ENCODE measurements at regions of chr3 and their contacts with region 1.

Region 1: GRCh38 chr3:194395778-194396547 is 3.1 kb downstream of the GP5 start:
- DNase-seq: peak; percentile 29 to 86 (median 74)
- ATAC-seq: peak; percentile 85
- H3K4me3 ChIP-seq: peak overlapping the region; percentile 73
- H3K4me3 Mint-ChIP-seq: peak overlapping the region; percentile 82 to 98 (median 90)
- H3K27ac ChIP-seq: peak overlapping the region; percentile 81
- H3K27ac Mint-ChIP-seq: peak overlapping the region; percentile 73 to 98 (median 93)
- H3K4me1 ChIP-seq: peaks cover 4 to 26% of the 10 kb centered on the region in 2 donors
- H3K4me1 Mint-ChIP-seq: peaks cover 34 to 64% (median 47%) of the 10 kb centered on the region in 7 donors
- H3K27me3 ChIP-seq: no peaks in the 10 kb centered on the region
- H3K27me3 Mint-ChIP-seq: peaks cover 0 to 26% (median 0%) of the 10 kb centered on the region in 5 donors

Region 2: GRCh38 chr3:194141415-194142155 is 254.4 kb before region 1 on chr3:
- CTCF ChIA-PET with region 1: no interaction called
- POLR2A ChIA-PET with region 1: interaction called, 3 read pairs
- intact Hi-C with region 1: loop called (anchors 1 to 2 kb)
- DNase-seq: peak in 7 of 9 donors; percentile 36 to 74 (median 46)
- ATAC-seq: peak; percentile 55
- H3K4me3 ChIP-seq: peak overlapping the region; percentile 40
- H3K4me3 Mint-ChIP-seq: peak overlapping the region; percentile 69 to 91 (median 80)
- H3K27ac ChIP-seq: peak overlapping the region; percentile 42
- H3K27ac Mint-ChIP-seq: peak overlapping the region; percentile 14 to 82 (median 60)
- H3K4me1 ChIP-seq: peaks cover 8 to 21% of the 10 kb centered on the region in 2 donors
- H3K4me1 Mint-ChIP-seq: peaks cover 18 to 41% (median 31%) of the 10 kb centered on the region in 7 donors
- H3K27me3 ChIP-seq: peaks cover 0 to 7% of the 10 kb centered on the region in 2 donors
- H3K27me3 Mint-ChIP-seq: peaks cover 0 to 60% (median 20%) of the 10 kb centered on the region in 5 donors

Region 3: DNA sequence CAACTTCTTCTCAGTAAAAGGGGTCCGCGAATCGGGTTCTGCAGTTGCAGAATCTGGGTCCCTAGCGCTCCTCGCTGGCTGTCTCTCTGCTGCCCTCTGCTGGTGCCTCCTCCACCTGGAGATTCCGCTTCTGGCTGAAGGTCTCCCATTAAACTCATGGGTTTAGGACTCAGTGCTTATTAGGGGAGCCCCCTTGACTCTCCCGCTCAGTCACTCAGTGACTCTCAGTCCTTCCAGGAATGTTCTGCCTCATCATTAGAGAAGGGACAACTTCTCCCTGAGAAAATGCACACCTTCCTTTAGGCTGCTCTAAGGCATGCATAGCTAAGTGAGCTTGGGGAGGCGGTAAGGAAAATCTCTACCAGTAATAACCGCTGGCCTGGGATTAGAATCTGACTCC is 52.0 kb before region 1 on chr3:
- CTCF ChIA-PET with region 1: interaction called, 256 read pairs
- POLR2A ChIA-PET with region 1: interaction called, 5 read pairs
- intact Hi-C with region 1: loop called in 1 of 2 experiments (anchors 1 kb)
- DNase-seq: peak; percentile 36 to 74 (median 59)
- ATAC-seq: peak; percentile 82
- H3K4me3 ChIP-seq: no peak overlapping the region
- H3K4me3 Mint-ChIP-seq: no peak overlapping the region
- H3K27ac ChIP-seq: no peak overlapping the region
- H3K27ac Mint-ChIP-seq: no peak overlapping the region
- H3K4me1 ChIP-seq: no peaks in the 10 kb centered on the region
- H3K4me1 Mint-ChIP-seq: peaks cover 0 to 5% (median 0%) of the 10 kb centered on the region in 7 donors
- H3K27me3 ChIP-seq: no peaks in the 10 kb centered on the region
- H3K27me3 Mint-ChIP-seq: peaks cover 0 to 7% (median 7%) of the 10 kb centered on the region in 5 donors

Region 4: DNA sequence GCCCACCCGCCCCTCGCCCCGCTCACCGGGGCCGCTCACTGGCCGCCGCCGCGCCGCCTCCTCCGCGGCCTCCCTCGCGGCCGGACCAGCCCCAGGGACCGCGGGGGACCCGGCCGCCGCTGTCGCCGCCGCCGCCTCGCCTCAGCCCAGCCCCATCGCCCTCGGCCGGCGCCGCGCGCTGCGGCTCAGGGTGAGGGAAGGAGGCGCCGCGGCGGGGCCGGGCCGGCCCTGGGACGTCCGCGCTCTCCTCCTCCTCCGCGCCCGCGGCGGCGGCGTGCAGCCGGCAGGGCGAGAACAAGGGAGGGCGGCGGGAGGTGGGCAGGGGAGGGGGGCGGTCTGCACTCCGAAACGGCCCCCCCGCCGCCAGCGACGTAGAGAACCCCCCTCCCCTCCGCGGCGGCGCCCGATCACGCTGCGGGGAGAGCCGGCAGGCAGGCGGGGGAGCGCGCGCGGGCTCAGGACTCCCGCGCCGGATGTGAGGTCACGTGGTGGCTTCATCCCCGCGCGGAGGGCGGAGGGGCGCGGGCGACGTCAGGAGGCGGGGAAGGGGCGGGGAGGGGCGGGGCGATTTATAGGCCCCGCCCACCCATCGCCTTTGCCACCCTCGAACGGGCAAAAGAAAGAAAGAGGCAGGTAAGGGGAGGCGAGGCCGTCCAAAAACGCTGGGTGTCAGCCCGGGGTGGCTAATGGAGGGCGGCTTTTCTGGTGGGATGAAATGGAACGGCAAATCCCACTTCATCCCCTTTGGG is 90.8 kb after region 1 on chr3 and contains the start of gene ATP13A3:
- CTCF ChIA-PET with region 1: no interaction called
- POLR2A ChIA-PET with region 1: interaction called, 3 read pairs
- intact Hi-C with region 1: loop called (anchors 1 kb)
- DNase-seq: peak; percentile 84 to 93 (median 91)
- ATAC-seq: peak; percentile 93
- H3K4me3 ChIP-seq: peak within 1 kb of the TSS; percentile 83
- H3K4me3 Mint-ChIP-seq: peak within 1 kb of the TSS; percentile 83 to 98 (median 93)
- H3K27ac ChIP-seq: peak within 1 kb of the TSS; percentile 82
- H3K27ac Mint-ChIP-seq: peak within 1 kb of the TSS; percentile 82 to 96 (median 94)
- H3K4me1 ChIP-seq: peaks cover 20 to 25% of the 10 kb centered on the region in 2 donors
- H3K4me1 Mint-ChIP-seq: peaks cover 41 to 60% (median 45%) of the 10 kb centered on the region in 7 donors
- H3K27me3 ChIP-seq: no peaks in the 10 kb centered on the region
- H3K27me3 Mint-ChIP-seq: no peaks in the 10 kb centered on the region
- total RNA-seq, gene ATP13A3: 46.5 to 81.8 (median 58.4) TPM